Ovary (tissue), 10 donors: ENCODE measurements at regions of chr9 and their contacts with region 1.

Region 1: DNA sequence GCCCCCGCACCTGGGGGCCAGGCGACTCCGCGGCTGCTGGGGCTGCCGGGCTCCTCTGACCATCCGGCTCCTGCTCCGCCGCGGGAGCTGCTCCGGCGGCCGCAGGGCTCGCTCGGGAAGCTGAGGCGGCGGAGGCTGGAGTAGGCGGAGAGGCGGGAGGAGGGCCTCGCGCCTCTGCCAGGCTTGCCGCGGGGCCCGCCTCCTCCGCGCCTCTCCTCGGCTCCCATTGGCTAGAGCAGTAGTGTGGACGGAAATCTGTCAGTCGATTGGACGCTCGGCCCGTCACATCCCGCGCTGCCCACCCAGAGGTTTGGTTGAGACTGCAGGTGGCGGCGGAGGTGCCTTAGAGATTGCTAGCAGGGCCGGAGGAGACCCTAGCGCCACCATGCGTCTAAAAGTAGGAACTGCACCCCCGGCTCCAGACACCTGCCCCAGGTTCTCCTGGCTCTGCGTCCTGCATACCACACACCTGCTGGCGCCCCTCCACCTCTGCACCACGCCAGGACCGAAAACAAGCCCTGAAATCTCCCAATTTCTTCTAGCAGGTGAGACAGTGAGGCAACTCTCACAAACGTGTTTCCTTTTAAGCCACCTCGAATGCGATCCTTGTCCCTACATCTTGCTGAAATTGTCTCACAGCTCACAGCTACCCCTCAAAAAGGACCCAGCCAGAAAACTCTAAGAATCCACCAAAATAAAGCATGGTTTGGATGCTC is at the start of gene SCAI:
- DNase-seq: peak; percentile 99
- H3K4me3 ChIP-seq: peak within 1 kb of the TSS; percentile 50
- H3K27ac ChIP-seq: peak within 1 kb of the TSS in 1 of 2 donors; percentile 53
- H3K4me1 ChIP-seq: no peaks in the 10 kb centered on the region
- H3K27me3 ChIP-seq: no peaks in the 10 kb centered on the region
- CTCF ChIP-seq: peak; percentile 94 to 99 (median 99)
- EP300 ChIP-seq: no peak
- POLR2A ChIP-seq: no peak
- total RNA-seq, gene SCAI: 8.1 to 13.3 (median 9.8) TPM

Region 2: DNA sequence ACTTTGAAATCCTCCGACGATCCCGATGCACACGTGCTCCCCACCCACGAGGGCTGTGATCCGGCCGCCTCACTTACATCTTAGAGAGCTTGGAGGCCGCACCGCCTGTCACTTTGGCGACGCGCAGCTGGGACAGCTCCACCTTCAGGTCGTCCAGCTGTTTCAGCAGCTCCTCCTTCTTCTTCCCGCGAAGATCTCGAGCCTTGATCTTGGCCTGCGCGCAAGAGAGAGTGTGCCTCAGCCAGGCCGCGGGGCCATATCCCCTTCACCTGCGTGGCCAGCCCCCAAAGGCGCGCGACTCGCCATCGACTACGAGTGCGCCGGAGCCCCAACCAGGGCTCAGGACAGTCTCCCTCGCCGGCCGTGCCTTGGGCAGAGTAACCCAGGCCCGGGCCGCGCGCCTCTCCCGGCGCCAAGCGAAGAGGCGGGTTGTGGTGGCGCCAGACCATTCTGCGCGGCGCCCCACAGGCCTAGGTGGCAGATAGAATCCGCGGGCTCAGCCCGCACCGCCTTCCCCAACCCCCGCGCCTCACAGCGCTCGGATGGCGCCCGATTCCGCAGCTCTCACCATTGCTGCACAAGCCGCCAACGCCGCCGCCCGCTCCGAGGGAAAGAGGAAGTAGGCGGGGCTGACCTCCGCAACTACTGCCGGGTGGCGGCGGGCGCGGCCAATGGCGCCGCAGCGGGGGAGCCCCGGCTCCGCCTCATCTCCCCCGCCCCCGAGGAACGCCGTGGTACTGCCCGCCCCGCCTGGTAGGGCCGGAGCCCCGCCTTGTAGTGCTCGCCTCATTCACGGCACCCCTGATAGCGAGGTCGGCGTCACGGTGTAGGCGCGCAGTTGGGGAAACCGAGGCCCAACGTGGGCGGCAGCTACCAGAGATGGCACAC is 281.9 kb before region 1 on chr9 and contains the starts of genes ARPC5L and RPL35:
- intact Hi-C with region 1: loop called in 1 of 4 experiments (anchors 10 kb)
- DNase-seq: peak; percentile 92 to 96 (median 94)
- H3K4me3 ChIP-seq: peak within 1 kb of the TSS; percentile 49
- H3K27ac ChIP-seq: peak within 1 kb of the TSS; percentile 47 to 76
- H3K4me1 ChIP-seq: peaks cover 6% of the 10 kb centered on the region
- H3K27me3 ChIP-seq: no peaks in the 10 kb centered on the region
- CTCF ChIP-seq: peak in 2 of 3 donors; percentile 15 to 24
- EP300 ChIP-seq: no peak
- POLR2A ChIP-seq: peak; percentile 88
- total RNA-seq, gene ARPC5L: 8.5 to 22.0 (median 16.6) TPM
- total RNA-seq, gene RPL35: 1,648 to 7,796 (median 2,205) TPM

Region 3: DNA sequence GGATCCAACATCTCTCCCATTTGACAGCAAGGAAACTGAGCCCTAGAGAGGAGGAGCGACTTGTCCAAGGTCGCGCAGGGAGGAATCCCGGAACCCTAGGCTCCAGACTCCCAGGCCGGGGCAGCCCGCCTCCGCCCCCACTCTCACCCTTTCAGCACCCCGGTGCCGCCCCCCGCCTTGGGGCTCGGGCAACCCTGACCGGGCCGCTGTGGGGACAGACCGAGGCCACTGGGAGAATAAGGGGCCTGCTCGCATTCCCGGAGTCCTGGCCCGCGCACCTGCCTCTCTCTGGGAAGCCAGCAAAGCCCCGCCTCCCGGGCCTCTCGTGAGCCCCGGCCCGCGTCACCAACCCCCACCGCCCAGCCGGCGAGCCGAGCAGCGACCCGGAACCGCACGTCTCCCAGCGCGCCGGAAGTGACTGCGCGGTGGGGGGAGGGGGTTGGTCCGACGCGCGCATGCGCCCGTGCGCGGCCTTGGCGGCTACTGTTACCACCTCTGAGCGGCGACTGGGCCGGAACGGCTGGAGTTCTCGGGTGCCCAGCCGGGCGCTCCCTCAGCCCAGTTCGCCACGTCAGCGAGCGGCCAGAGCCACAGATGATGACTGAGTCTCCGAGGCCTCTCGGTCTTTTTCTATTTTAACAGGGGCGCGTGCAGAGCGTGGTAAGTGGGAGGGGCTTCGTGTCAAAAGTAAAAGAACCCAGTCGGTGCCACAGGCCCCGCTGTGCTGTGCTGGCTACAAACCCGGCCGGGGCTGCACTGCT is 202.7 kb before region 1 on chr9 and contains the start of gene GOLGA1:
- intact Hi-C with region 1: loop called in 1 of 4 experiments (anchors 5 kb)
- DNase-seq: peak; percentile 96 to 98 (median 97)
- H3K4me3 ChIP-seq: peak within 1 kb of the TSS; percentile 91
- H3K27ac ChIP-seq: peak within 1 kb of the TSS; percentile 86 to 97
- H3K4me1 ChIP-seq: peaks cover 5% of the 10 kb centered on the region
- H3K27me3 ChIP-seq: no peaks in the 10 kb centered on the region
- CTCF ChIP-seq: peak in 2 of 3 donors; percentile 9 to 17
- EP300 ChIP-seq: no peak
- POLR2A ChIP-seq: peak; percentile 89
- total RNA-seq, gene GOLGA1: 8.8 to 26.8 (median 19.2) TPM

Region 4: GRCh38 chr9:125172031-125172755 is 28.7 kb after region 1 on chr9:
- intact Hi-C with region 1: no loop called
- DNase-seq: no peak
- H3K4me3 ChIP-seq: no peak overlapping the region
- H3K27ac ChIP-seq: no peak overlapping the region
- H3K4me1 ChIP-seq: no peaks in the 10 kb centered on the region
- H3K27me3 ChIP-seq: no peaks in the 10 kb centered on the region
- CTCF ChIP-seq: no peak
- EP300 ChIP-seq: no peak
- POLR2A ChIP-seq: no peak